PC-3 (cell line): ENCODE measurements at regions of chr7 and their contacts with region 1.

Region 1: DNA sequence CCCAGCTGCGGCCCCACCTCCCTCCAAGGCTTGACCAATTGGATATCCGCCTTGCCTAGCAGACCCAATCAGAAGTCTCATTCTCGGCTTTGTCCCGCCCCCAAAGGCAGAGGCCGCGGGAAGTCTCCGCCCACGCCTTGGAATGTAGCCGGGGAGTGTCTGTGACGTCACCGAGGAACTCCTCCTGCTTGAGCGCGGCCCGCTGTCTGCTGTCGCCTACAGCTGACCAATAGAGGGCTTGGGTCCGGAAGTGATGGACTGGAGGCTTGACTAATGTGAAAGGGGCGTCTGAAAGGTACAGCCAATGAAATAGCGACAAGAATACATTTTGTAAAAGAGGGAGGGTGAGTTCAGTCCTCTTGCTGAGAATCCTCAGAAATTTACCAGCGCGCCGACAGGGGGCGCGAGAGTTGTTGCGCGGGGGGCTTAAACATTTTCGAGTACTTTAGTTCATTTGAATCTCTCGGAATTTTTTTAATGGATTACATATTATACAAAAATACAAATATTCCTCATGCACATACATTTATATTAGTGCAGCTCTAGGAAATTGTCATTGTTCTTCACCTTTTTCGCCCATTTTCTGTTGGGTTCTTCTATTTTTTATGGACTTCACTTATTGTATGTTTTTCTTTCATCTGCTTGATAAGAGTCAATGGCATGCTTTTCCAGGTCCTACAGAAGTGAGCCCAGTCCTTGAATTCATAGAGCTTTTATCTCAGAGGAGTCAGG is 376 bp upstream of the CREB3L2 start:
- DNase-seq: peak; percentile 98
- ATAC-seq: peak; percentile 91
- H3K4me3 ChIP-seq: peak overlapping the region; percentile 95
- H3K27ac ChIP-seq: peak overlapping the region; percentile 76
- H3K4me1 ChIP-seq: peaks cover 26% of the 10 kb centered on the region
- H3K27me3 ChIP-seq: no peaks in the 10 kb centered on the region
- CTCF ChIP-seq: peak; percentile 88

Region 2: DNA sequence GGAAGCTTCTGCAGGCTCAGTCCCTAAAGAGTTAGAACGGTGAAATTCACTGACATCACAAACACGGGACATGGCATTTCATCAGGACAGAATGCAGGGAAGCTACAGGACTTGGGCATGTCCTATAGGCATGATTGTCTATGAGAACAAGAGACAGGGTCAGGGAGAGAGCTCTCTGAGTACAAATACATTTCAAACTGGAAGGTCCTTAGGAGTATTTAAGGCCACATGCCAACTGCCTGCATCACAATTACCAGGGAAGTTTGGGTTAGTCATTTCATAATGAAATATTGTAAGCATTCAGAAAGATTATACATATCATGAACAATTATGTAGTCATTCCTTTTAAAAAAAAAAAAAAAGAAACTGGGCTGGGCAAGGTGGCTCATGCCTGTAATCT is 71.7 kb before region 1 on chr7:
- CTCF ChIA-PET with region 1: interaction called, 5 read pairs
- POLR2A ChIA-PET with region 1: no interaction called
- intact Hi-C with region 1: loop called (anchors 1 kb)
- DNase-seq: peak; percentile 88
- ATAC-seq: peak; percentile 83
- H3K4me3 ChIP-seq: no peak overlapping the region
- H3K27ac ChIP-seq: peak overlapping the region; percentile 84
- H3K4me1 ChIP-seq: peaks cover 26% of the 10 kb centered on the region
- H3K27me3 ChIP-seq: no peaks in the 10 kb centered on the region
- CTCF ChIP-seq: no peak

Region 3: DNA sequence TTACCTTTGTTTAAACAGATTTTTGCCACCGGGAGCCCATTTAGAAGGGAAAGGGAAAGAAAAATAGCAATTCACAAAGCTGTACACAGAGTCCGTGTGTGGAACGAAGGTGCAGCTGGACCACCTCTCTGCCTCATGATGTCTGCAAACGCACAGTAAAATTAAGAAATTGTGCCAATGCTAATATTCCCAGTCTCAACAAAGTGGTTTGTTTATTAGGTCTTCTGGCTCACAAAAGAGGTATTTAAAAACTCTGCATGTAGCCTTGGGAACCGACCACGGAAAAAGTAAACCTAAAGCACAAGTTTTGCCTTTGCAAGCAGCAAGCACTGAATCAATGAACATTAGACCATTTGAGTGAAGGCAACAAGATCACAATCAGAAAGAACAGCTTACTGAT is 58.1 kb before region 1 on chr7:
- CTCF ChIA-PET with region 1: no interaction called
- POLR2A ChIA-PET with region 1: no interaction called
- intact Hi-C with region 1: loop called (anchors 1 kb)
- DNase-seq: peak; percentile 23
- ATAC-seq: peak; percentile 17
- H3K4me3 ChIP-seq: no peak overlapping the region
- H3K27ac ChIP-seq: no peak overlapping the region
- H3K4me1 ChIP-seq: peaks cover 21% of the 10 kb centered on the region
- H3K27me3 ChIP-seq: no peaks in the 10 kb centered on the region
- CTCF ChIP-seq: no peak

Region 4: DNA sequence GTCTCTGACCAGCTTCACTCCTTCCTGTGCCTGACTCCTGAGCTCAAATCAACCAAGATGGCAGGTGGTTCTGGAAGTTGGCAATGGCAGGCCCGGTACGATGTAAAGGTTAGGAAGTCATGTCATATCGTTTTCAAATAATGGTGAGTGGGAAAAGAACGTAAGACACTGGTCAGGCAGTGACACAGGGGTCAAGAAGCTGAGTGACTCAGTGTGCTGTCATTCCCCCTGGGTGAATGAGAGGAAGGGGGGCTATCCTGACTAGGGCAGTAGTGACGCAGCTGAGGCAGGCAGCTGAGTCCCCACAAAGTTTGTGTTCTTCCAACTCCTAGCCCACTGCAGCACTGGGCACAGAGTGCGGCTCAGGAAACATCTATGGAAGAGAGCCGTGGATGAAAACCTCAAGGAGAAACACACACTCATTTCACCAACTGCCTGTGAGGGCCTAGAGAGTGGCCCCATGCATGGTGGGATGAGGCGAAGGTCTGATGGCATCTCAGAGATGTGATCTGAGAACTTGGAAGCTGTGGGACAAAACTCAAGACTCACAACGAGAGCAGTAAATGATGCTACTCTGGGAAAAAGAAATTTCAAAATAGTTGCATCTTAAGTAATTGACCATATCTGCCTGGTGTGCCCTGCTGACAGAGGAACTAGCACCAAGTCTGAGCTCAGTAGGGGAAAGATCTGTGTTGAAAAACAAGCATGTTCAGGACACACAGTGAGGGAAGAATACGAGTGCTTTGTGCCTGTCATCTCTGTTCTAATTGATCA is 23.6 kb before region 1 on chr7:
- CTCF ChIA-PET with region 1: no interaction called
- POLR2A ChIA-PET with region 1: no interaction called
- intact Hi-C with region 1: loop called (anchors 2 kb)
- DNase-seq: peak; percentile 92
- ATAC-seq: peak; percentile 82
- H3K4me3 ChIP-seq: no peak overlapping the region
- H3K27ac ChIP-seq: peak overlapping the region; percentile 94
- H3K4me1 ChIP-seq: peaks cover 48% of the 10 kb centered on the region
- H3K27me3 ChIP-seq: no peaks in the 10 kb centered on the region
- CTCF ChIP-seq: no peak

Region 5: GRCh38 chr7:138478499-138478908 is 476.2 kb after region 1 on chr7:
- CTCF ChIA-PET with region 1: no interaction called
- POLR2A ChIA-PET with region 1: interaction called, 29 read pairs
- intact Hi-C with region 1: no loop called
- DNase-seq: no peak
- ATAC-seq: no peak
- H3K4me3 ChIP-seq: no peak overlapping the region
- H3K27ac ChIP-seq: no peak overlapping the region
- H3K4me1 ChIP-seq: peaks cover 13% of the 10 kb centered on the region
- H3K27me3 ChIP-seq: no peaks in the 10 kb centered on the region
- CTCF ChIP-seq: no peak

Region 6: GRCh38 chr7:138900035-138900828 is 898.0 kb after region 1 on chr7:
- CTCF ChIA-PET with region 1: no interaction called
- POLR2A ChIA-PET with region 1: no interaction called
- intact Hi-C with region 1: no loop called
- DNase-seq: peak; percentile 86
- ATAC-seq: peak; percentile 62
- H3K4me3 ChIP-seq: no peak overlapping the region
- H3K27ac ChIP-seq: peak overlapping the region; percentile 99
- H3K4me1 ChIP-seq: peaks cover 58% of the 10 kb centered on the region
- H3K27me3 ChIP-seq: no peaks in the 10 kb centered on the region
- CTCF ChIP-seq: no peak